Activated T-helper 2 cell treated with anti-CD3 and anti-CD28 coated beads, Interferon-gamma antibody, Interleukin-2, Interleukin-4, amounts not matched to agents 10 μg/mL and 5 μg/mL and 100 μg/mL, durations not matched to agents 14 hours and 24 hours and 36 hours (primary cell): ENCODE measurements at regions of chr5 and their contacts with region 1.

Region 1: DNA sequence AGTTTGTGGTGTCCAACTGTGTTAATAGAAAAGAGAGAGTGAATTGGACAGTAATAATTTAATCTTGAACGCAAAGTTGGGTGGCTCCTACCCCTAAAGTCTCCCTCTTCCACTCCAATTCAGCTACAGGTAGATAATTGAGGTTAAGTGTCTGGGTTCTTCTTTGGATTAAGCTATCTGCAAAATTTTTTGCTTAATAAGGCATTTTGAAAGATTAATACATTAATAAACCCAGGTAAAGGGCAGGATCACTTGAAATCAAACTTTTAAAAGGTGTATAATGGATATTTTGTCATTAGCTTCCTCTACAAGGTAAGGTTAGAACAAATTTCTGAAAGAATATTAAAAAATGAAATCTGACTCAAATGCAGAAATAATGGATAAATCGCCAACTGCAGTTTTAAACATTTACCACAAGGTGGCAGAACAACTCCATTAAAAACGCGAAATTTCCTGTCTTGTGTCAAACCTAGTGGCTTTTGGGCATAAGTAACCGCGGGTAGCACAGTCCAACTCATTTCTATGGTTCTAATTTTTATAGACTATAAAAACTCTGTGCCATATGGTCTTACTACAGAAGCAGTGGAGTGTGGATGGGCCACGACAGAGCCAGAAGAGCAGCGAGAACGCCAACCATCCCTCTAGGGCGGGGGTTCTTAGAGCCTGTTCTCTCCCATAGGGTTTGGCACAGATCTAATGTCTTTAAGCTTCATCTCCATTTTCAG is 276.5 kb downstream of the ARHGEF28 start:
- DNase-seq: no peak
- H3K4me3 Mint-ChIP-seq: no peak overlapping the region
- H3K27ac Mint-ChIP-seq: no peak overlapping the region
- H3K4me1 Mint-ChIP-seq: peaks cover 17% of the 10 kb centered on the region
- H3K27me3 Mint-ChIP-seq: peaks cover 45% of the 10 kb centered on the region

Region 2: DNA sequence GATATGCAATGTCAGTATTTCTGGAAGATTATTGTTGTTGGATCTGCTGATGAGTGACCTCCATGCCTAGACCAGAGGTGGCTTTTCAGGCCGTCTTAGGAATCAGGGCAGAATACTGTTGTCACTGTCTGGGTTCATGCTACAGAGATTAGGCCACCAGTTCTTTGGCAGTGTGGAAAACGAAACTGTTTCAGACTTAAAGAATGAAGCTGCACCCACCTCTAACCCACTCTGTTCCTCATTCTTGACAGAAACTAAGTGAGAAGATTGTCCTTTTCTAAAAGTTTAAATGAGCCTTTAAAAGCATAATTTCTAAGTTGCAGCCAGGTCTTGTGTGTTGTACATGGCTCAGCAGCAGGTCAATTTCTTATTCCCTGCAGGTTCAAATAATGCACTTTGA is 293.7 kb after region 1 on chr5:
- intact Hi-C with region 1: loop called (anchors 10 kb)
- DNase-seq: no peak
- H3K4me3 Mint-ChIP-seq: no peak overlapping the region
- H3K27ac Mint-ChIP-seq: no peak overlapping the region
- H3K4me1 Mint-ChIP-seq: peaks cover 45% of the 10 kb centered on the region
- H3K27me3 Mint-ChIP-seq: peaks cover 22% of the 10 kb centered on the region

Region 3: GRCh38 chr5:74648835-74649293 is 746.4 kb after region 1 on chr5:
- intact Hi-C with region 1: loop called (anchors 1 kb)
- DNase-seq: peak; percentile 11
- H3K4me3 Mint-ChIP-seq: no peak overlapping the region
- H3K27ac Mint-ChIP-seq: no peak overlapping the region
- H3K4me1 Mint-ChIP-seq: peaks cover 2% of the 10 kb centered on the region
- H3K27me3 Mint-ChIP-seq: peaks cover 39% of the 10 kb centered on the region

Region 4: GRCh38 chr5:74919487-74919886 is 1017.0 kb after region 1 on chr5:
- intact Hi-C with region 1: loop called (anchors 10 kb)
- DNase-seq: no peak
- H3K4me3 Mint-ChIP-seq: no peak overlapping the region
- H3K27ac Mint-ChIP-seq: no peak overlapping the region
- H3K4me1 Mint-ChIP-seq: no peaks in the 10 kb centered on the region
- H3K27me3 Mint-ChIP-seq: peaks cover 2% of the 10 kb centered on the region